Right ventricle myocardium inferior (tissue), 1 donor: ENCODE measurements at regions of chr6 and their contacts with region 1.

Region 1: GRCh38 chr6:15264902-15265761 is 19.3 kb downstream of the JARID2 start:
- DNase-seq: no peak
- ATAC-seq: peak; percentile 77

Region 2: GRCh38 chr6:15062516-15063252 is 202.4 kb before region 1 on chr6:
- intact Hi-C with region 1: no loop called
- DNase-seq: no peak
- ATAC-seq: peak; percentile 70

Region 3: GRCh38 chr6:15312500-15312899 is 47.4 kb after region 1 on chr6:
- intact Hi-C with region 1: loop called (anchors 5 kb)
- DNase-seq: peak; percentile 65
- ATAC-seq: no peak